ENCODE measurements at regions of chr18 and their contacts with region 1.

Region 1: DNA sequence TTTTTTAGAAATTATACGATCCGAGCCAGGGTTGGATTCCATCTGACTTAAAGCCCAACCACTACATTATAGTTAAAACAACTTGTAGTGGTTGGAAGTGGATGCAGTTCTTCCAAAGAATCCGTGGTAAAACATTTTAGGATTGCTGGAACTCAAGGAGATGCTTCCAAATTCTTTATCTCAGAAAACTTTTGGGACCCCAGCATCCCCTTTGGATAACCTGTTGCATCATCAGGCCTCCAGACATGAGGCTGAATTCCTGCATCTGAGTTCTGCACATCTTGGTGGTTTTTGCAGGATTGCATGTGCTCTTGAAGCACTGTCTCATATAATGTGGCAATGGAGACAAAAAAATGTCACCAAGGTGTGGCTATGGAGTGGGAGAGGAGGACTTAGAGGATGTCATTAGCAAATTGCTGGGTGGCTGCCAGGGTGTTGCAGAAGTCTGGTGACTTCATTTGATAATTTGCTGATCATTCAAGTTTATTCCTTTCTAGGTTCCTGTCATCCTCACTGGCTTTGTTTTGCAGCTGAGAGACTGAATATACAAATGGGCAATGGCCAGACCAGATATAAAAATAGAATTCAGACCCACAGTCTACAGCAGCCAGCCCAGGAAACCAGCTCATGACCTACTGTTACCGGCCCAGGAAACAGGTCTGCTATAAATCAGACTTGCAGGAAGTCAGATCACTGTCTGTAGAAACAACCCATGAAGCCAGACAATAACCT is 207.7 kb downstream of the BCL2 start:
- DNase-seq: no peak
- ATAC-seq: no peak
- H3K4me3 ChIP-seq: no peak overlapping the region
- H3K27ac ChIP-seq: no peak overlapping the region
- H3K4me1 ChIP-seq: no peaks in the 10 kb centered on the region
- H3K27me3 ChIP-seq: no peaks in the 10 kb centered on the region; the same call in 1 of the 2 replicates
- CTCF ChIP-seq: no peak
- POLR2A ChIP-seq: no peak
- RAD21 ChIP-seq: no peak

Region 2: DNA sequence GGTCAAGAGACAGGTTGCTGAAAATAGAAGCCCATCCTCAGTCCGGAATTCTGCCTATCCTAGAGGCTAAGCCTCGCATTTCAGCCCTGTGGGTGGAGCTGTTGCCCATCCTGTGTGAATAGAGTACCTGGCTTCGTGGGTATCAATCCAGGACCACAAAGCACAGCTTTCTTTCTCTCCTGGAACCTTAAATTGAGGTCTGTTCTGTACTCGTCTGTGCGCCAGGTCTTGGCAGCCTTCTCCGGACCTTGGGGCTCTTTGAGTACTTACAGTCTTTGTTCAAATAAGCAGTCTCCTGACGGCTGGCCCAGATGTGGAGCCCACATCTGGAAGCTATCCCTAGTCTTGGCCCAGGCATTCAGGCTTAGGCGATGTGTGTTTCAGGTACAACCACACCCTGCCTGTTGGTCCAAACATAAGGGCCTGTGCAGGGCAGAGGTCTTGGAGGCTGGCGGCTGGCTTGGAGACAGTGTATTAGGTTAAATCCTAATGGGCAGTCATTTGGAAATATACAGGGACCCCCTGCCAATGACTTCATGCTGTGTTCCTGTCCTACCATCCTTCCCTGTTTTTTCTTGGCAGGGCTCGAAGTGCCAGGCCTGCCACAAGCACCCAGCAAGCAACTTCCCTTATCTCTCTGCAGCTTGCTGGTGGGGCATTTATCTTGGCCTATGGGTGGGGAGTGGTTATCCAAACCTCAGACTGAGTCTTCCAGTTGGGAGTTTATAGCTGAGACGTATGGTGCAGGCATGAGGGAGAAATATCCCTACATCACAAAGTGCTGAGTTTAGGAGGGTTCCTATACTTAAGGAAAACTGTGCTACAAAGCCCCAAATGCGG is 86.4 kb before region 1 on chr18:
- CTCF ChIA-PET with region 1: no interaction called
- POLR2A ChIA-PET with region 1: no interaction called
- RAD21 ChIA-PET with region 1: no interaction called
- intact Hi-C with region 1: loop called (anchors 5 kb)
- DNase-seq: no peak
- ATAC-seq: peak; percentile 84
- H3K4me3 ChIP-seq: no peak overlapping the region
- H3K27ac ChIP-seq: no peak overlapping the region
- H3K4me1 ChIP-seq: no peaks in the 10 kb centered on the region
- H3K27me3 ChIP-seq: no peaks in the 10 kb centered on the region
- CTCF ChIP-seq: peak; percentile 38 to 56 (median 54); a peak in 5 of 6 replicates
- POLR2A ChIP-seq: no peak
- RAD21 ChIP-seq: peak; percentile 70

Region 3: DNA sequence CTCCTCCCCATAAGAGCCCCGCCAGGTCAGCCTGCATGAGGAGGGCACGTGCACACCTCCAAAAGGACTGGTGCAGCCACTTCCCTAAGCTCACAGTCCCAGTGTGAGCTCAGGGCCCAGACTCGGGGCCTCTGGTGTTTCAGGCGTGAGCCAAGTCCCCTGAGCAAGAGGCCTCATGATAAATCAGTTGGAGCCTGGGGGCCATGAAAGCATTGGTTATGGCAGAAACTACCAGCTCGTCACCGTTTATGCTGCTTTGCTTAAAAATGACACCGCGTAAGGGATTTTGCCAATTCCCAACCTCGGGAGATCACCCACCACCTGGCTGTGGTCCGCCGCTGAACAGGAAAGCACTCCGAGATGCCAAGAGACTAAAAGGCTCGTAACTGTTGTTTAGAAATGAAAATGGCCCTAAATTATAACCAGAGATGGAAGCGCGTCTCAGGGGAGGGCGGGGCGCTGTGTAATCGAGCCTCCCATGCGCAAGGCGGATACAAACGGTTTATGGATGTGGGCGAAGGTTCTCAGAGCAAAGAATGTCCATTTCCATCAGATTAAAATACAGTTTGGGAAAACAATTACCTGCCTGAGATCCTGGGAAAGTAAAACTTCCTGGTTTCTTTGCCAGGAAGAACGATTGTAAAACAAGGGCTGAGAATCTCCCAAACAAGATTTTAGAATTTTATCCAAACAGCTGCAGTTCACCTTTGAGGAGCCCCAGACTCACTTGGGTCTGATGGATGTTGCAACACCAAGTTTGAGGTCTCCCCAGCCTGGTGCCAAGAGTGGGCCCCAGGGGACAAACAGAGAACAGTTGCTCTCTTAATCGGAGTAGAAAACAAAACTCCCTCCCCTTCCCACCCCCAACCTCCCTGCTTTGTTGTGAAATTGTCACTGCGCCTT is 66.3 kb after region 1 on chr18:
- CTCF ChIA-PET with region 1: no interaction called
- POLR2A ChIA-PET with region 1: no interaction called
- RAD21 ChIA-PET with region 1: no interaction called
- intact Hi-C with region 1: no loop called
- DNase-seq: no peak
- ATAC-seq: no peak
- H3K4me3 ChIP-seq: no peak overlapping the region
- H3K27ac ChIP-seq: no peak overlapping the region
- H3K4me1 ChIP-seq: no peaks in the 10 kb centered on the region
- H3K27me3 ChIP-seq: peaks cover 21% of the 10 kb centered on the region; the same call in 1 of the 2 replicates
- CTCF ChIP-seq: no peak
- POLR2A ChIP-seq: no peak
- RAD21 ChIP-seq: no peak

Measured in HCT116 (cell line).